Dorsolateral prefrontal cortex (tissue), 120 donors: ENCODE measurements at regions of chr7 and their contacts with region 1.

Region 1: GRCh38 chr7:97117372-97118188 is at the start of gene SDHAF3:
- DNase-seq: peak; percentile 87 to 96 (median 94)
- H3K4me3 ChIP-seq: peak within 1 kb of the TSS; percentile 54 to 94 (median 81)
- H3K27ac ChIP-seq: peak within 1 kb of the TSS; percentile 3 to 92 (median 81)
- H3K27me3 ChIP-seq: no peaks in the 10 kb centered on the region
- CTCF ChIP-seq: peak in 55 of 56 donors; percentile 18 to 78 (median 54)
- total RNA-seq, gene SDHAF3: 4.7 to 20.6 (median 12.0) TPM

Region 2: DNA sequence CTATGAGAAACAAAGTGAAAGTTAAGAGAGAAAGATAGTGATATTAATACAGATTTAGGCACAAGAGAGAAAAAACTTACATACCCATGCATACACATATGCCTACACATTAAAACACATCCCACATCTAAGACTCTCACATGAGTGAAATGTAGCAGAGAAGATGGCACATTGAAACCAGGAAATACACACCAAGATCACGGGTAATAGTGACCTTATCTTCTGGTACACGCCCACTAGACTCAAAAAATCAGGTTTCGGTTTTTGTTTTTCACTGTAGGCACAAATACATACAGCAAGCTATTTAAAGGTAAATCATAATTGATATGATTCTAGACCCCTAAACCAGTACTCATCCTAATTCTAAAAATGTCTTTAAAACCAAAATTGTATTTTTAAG is 389.1 kb after region 1 on chr7:
- intact Hi-C with region 1: no loop called
- DNase-seq: no peak
- H3K4me3 ChIP-seq: no peak overlapping the region
- H3K27ac ChIP-seq: no peak overlapping the region
- H3K27me3 ChIP-seq: peaks cover 0 to 6% (median 0%) of the 10 kb centered on the region in 45 donors
- CTCF ChIP-seq: no peak

Region 3: GRCh38 chr7:98119256-98119918 is 1001.8 kb after region 1 on chr7:
- intact Hi-C with region 1: loop called in 1 of 2 experiments (anchors 10 kb)
- DNase-seq: no peak
- H3K4me3 ChIP-seq: no peak overlapping the region
- H3K27ac ChIP-seq: no peak overlapping the region
- H3K27me3 ChIP-seq: no peaks in the 10 kb centered on the region
- CTCF ChIP-seq: no peak